PC-3 (cell line): ENCODE measurements at regions of chr21 and their contacts with region 1.

Region 1: DNA sequence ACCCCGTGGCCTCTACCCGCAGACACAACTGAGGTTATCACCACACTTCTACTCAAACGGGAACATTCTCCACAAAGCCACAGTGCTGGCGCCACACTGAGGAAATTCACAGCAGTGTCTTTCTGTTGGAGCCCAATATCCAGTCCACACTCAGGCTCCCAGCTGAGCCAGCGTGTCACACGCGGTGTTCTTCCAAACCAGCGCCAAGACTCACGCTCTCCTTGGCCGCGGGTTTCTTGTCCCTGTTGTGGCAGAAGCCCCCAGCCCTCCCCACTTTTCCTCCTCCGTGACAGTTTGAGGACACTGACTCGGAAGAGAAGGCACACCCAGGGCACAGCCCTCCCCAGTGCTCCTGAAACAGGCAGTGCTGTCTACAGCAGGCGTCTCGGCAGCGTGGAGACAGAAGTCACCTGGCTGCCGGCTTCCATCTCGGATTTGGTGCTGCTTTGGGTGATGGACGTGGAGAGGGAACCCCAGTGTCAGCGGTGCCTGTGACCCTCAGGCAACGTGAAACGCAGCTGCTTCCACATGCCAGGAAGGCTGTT is 35.4 kb upstream of the AGPAT3 start:
- DNase-seq: peak; percentile 52
- ATAC-seq: peak; percentile 39
- H3K4me3 ChIP-seq: peak overlapping the region; percentile 18; the same call in 1 of the 2 replicates
- H3K27ac ChIP-seq: no peak overlapping the region
- H3K4me1 ChIP-seq: peaks cover 6% of the 10 kb centered on the region
- H3K27me3 ChIP-seq: no peaks in the 10 kb centered on the region
- CTCF ChIP-seq: peak; percentile 57

Region 2: DNA sequence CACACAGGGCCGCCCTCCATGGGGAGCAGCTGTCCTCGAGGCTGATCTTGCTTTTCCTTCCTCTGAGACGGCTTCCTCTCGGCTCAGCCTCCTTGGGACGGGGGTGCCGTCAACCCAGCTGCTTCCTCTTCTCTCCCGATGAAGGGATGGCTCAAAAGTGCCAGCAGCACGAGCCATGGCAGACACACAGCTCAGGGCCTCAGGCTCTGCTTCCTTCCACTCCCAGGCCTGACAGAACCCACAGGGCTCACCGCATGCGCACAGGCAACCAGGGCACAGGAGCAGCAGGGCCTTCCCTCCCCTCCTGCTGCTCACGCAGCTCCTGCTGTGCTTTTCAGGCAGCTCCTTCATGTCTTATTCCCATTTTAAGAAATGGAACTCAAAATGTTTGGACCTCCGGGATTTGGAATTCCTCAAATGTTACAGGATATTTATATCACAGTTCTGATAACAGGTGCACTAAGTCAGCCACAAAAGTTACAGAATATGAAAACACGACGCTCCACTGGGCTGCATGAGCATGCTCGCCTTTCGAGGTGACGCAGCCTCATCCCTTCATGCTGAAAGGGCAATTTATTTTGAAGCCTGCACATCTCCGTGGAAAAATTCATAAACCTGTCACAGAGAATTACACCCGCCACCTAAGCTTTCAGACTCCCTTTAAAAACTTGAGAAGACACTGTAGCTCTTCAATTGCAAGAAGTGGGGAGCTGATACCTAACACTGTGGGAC is 254.7 kb before region 1 on chr21:
- CTCF ChIA-PET with region 1: no interaction called
- POLR2A ChIA-PET with region 1: no interaction called
- intact Hi-C with region 1: no loop called
- DNase-seq: no peak
- ATAC-seq: no peak
- H3K4me3 ChIP-seq: no peak overlapping the region
- H3K27ac ChIP-seq: no peak overlapping the region
- H3K4me1 ChIP-seq: no peaks in the 10 kb centered on the region
- H3K27me3 ChIP-seq: no peaks in the 10 kb centered on the region
- CTCF ChIP-seq: no peak

Region 3: DNA sequence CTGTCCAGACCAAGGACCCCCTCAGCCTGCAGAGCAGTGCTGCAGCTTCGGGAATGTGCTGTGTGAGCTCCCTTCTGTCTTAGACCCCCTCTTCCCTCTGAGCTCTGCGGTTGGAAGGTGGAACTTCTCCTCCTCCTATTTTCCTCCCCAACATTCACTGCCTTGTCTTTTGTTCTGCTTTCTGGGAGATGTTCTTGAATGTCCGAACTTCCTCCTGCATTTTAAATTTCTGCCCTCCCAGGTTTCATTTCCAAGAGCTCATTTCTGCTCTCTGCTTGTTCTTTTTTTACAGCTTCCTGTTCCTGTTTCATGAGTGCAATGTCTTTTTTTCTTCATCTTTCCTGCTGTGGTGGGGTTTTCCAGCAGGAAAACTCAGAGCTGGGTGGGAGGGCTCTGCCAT is 11.0 kb before region 1 on chr21:
- CTCF ChIA-PET with region 1: interaction called, 10 read pairs
- POLR2A ChIA-PET with region 1: no interaction called
- intact Hi-C with region 1: no loop called
- DNase-seq: no peak
- ATAC-seq: no peak
- H3K4me3 ChIP-seq: no peak overlapping the region
- H3K27ac ChIP-seq: no peak overlapping the region
- H3K4me1 ChIP-seq: peaks cover 13% of the 10 kb centered on the region
- H3K27me3 ChIP-seq: no peaks in the 10 kb centered on the region
- CTCF ChIP-seq: no peak